ENCODE measurements at regions of chr9 and their contacts with region 1.

Region 1: DNA sequence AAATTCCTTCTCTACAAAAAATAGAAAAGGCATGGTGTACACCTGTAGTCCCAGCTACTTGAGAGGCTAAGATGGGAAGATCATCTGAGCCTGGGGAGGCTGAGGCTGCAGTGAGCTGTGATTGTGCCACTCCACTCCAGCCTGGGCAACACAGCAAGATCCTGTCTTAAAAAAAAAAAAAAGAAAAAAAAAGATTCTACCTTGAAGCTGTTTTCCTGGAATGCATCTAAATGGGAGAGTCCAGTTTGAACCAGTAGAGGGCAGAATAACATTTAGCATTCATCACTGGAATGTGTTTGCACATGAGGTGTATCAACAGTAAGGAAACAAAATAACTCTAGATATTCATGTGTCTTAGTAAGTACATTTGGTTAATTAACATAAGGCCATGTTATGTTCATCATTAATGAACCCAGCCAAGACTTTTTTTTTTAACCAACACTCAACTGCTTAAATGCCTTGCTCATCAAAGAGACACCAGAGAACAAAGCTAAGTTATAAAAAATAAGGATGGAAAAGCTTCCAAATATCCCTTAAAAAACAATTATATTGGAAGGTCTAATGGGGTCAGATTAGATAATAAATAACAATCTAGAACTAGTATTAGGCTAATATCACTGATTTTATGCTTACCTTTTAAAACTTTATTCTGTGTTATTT is 16.1 kb downstream of the IFNE start:
- DNase-seq: peak; percentile 80
- H3K4me3 Mint-ChIP-seq: no peak overlapping the region
- H3K27ac Mint-ChIP-seq: no peak overlapping the region
- H3K4me1 Mint-ChIP-seq: no peaks in the 10 kb centered on the region
- H3K27me3 Mint-ChIP-seq: peaks cover 28% of the 10 kb centered on the region

Region 2: GRCh38 chr9:21317956-21318923 is 147.7 kb before region 1 on chr9:
- intact Hi-C with region 1: no loop called
- DNase-seq: peak; percentile 77
- H3K4me3 Mint-ChIP-seq: no peak overlapping the region
- H3K27ac Mint-ChIP-seq: no peak overlapping the region
- H3K4me1 Mint-ChIP-seq: no peaks in the 10 kb centered on the region
- H3K27me3 Mint-ChIP-seq: peaks cover 18% of the 10 kb centered on the region

Region 3: DNA sequence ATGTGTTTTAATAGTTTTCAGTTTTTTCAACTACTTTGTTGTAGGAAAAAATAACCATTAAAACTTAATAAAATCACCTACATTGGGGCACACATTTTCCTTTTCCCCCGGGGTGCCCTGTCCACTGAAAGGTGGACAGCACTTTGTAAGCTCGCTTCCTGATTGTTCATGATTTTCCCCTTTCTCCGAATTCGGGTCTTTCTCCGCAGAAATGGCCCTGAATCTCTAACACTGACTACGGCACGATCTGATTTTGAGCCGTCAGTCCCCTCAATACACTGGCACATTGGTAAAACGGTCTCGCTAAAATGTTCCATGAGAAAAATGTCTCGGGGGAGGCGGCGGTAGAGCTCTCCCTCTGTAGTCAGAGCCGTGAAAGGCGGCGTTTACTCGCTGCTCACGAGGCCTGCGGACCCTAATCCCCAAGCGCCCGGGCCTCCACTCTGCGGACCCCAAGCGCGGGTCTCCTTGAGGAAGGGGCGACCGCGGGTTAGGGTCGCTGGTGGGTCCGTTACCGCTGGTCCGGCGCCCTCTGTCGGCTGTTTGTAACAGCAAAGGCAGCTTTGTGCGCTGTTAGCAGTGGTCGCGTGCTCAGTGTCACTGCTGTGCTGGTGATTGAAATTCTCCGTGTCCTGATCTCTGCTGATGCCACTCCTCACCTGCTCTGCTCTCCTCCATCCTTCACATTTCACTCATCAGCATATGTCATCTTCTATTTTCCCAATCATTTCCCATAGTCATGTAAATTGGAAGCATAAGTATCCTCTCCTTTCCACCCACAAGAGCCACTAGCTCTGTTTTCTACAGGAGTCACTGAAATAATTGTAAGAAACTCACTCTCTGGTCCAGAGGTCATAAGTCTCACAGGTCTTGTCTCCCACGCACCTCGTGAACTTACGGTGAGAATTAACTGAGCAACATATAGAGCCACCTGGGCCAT is 69.9 kb before region 1 on chr9:
- intact Hi-C with region 1: no loop called
- DNase-seq: peak; percentile 86
- H3K4me3 Mint-ChIP-seq: peak overlapping the region; percentile 45
- H3K27ac Mint-ChIP-seq: no peak overlapping the region
- H3K4me1 Mint-ChIP-seq: peaks cover 4% of the 10 kb centered on the region
- H3K27me3 Mint-ChIP-seq: peaks cover 74% of the 10 kb centered on the region

Region 4: GRCh38 chr9:21709464-21710058 is 243.6 kb after region 1 on chr9:
- intact Hi-C with region 1: loop called (anchors 2 kb)
- DNase-seq: peak; percentile 89
- H3K4me3 Mint-ChIP-seq: no peak overlapping the region
- H3K27ac Mint-ChIP-seq: no peak overlapping the region
- H3K4me1 Mint-ChIP-seq: peaks cover 13% of the 10 kb centered on the region
- H3K27me3 Mint-ChIP-seq: peaks cover 35% of the 10 kb centered on the region

Measured in activated CD4-positive, alpha-beta T cell treated with anti-CD3 and anti-CD28 coated beads, Interleukin-2, amount 10 ng/mL, durations not matched to agents 24 days and 14 days (primary cell).